ENCODE measurements at regions of chr6 and their contacts with region 1.

Region 1: GRCh38 chr6:157764178-157765033 is 58.6 kb upstream of the SNX9 start:
- DNase-seq: peak; percentile 96

Region 2: GRCh38 chr6:157873735-157874344 is 109.4 kb after region 1 on chr6:
- in situ Hi-C with region 1: loop called (anchors 10 kb)
- DNase-seq: peak; percentile 82